Caki2 (cell line): ENCODE measurements at regions of chr1 and their contacts with region 1.

Region 1: DNA sequence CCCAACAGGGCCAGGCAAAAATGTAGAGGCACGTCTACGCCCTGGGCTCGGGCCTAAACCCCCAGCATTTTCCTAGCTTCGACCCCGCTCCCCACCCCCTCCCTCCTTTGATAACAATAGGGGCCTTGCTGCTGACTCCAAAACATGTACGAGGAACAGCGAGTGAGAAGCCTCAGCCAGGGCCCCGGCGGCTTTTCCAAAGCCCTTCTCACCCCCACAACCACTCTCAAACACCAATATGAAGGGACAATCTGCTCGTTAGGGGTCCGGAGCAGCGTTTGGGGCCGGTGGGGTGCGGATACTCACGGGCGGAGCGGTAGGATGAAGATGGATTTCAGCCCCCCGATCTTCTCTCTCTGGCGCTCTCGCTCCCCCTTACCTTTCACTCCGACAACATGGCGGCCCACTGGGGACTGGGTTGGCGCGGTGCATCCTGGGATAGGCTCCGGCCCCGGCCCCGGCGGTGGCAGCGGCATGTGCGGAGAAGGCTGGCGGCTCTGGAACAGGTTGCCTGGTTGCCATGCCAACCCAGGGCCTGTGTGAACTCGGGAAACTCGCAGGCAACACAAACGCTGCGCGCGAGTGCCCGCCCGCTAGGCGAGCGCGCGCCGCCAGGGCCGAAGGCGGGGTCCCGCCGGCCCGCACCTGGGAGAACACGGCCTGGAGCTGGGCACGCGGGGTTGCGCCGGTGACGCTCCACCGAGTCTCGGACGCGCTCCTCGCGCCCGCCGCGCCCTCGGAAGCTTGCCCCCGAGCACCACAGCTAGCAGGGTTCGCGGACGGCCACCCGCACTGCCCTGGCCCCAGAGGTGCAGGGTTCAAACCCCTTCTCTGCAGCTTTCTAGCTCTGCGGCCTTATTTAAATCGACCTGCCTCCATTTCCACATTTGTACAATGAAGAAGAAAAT is at the start of gene PUM1:
- DNase-seq: peak; percentile 97
- total RNA-seq, gene PUM1: 27.4 and 35.4 TPM in 2 replicates

Region 2: GRCh38 chr1:30840904-30841598 is 224.5 kb before region 1 on chr1:
- in situ Hi-C with region 1: no loop called
- DNase-seq: no peak

Region 3: GRCh38 chr1:31155216-31155841 is 89.8 kb after region 1 on chr1:
- in situ Hi-C with region 1: loop called (anchors 10 kb)
- DNase-seq: peak; percentile 75